ENCODE measurements at regions of chr18 and their contacts with region 1.

Region 1: DNA sequence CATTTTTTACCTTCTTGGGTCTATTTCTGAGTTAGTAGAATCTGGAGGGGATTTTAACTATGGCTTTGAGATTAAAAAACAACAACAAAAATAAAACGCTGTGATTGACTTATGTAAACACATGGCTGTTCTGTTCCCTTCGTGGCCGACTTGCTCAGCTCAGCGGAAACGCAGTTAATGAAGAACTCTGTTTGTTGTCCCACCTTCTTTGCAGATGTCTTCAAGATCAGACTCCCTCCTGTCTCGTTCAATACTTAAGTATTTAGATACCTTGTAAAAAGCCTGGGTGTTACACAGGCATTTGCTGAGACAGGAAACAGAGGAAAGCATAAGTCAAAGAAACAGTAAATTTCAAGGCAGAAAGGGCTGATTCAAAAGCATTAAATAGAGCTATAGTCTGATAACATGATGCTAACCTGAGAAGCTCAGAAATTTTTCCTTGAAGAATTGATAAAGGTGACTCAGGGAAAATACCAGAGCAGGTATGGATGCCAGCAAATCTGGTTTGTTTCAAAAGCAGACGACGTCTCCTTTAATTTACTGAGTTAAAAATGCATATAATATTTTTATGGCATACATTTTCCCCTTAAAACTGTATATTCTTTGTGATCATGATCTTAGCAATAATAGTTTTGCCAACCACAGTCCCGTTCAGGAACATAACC is 21.7 kb upstream of the POLI start:
- DNase-seq: no peak
- ATAC-seq: no peak
- H3K4me3 Mint-ChIP-seq: no peak overlapping the region
- H3K27ac Mint-ChIP-seq: peak overlapping the region; percentile 87
- H3K4me1 Mint-ChIP-seq: peaks cover 45% of the 10 kb centered on the region
- H3K27me3 Mint-ChIP-seq: no peaks in the 10 kb centered on the region
- CTCF ChIP-seq: no peak

Region 2: GRCh38 chr18:54140641-54141040 is 107.0 kb before region 1 on chr18:
- CTCF ChIA-PET with region 1: no interaction called
- POLR2A ChIA-PET with region 1: no interaction called
- intact Hi-C with region 1: no loop called
- DNase-seq: no peak
- ATAC-seq: no peak
- H3K4me3 Mint-ChIP-seq: no peak overlapping the region
- H3K27ac Mint-ChIP-seq: no peak overlapping the region
- H3K4me1 Mint-ChIP-seq: no peaks in the 10 kb centered on the region
- H3K27me3 Mint-ChIP-seq: no peaks in the 10 kb centered on the region
- CTCF ChIP-seq: no peak

Region 3: GRCh38 chr18:54261894-54262293 is 14.3 kb after region 1 on chr18:
- CTCF ChIA-PET with region 1: no interaction called
- POLR2A ChIA-PET with region 1: interaction called, 13 read pairs
- intact Hi-C with region 1: loop called (anchors 1 kb)
- DNase-seq: no peak
- ATAC-seq: peak; percentile 81
- H3K4me3 Mint-ChIP-seq: peak overlapping the region; percentile 67
- H3K27ac Mint-ChIP-seq: peak overlapping the region; percentile 93
- H3K4me1 Mint-ChIP-seq: peaks cover 60% of the 10 kb centered on the region
- H3K27me3 Mint-ChIP-seq: no peaks in the 10 kb centered on the region
- CTCF ChIP-seq: no peak

Region 4: DNA sequence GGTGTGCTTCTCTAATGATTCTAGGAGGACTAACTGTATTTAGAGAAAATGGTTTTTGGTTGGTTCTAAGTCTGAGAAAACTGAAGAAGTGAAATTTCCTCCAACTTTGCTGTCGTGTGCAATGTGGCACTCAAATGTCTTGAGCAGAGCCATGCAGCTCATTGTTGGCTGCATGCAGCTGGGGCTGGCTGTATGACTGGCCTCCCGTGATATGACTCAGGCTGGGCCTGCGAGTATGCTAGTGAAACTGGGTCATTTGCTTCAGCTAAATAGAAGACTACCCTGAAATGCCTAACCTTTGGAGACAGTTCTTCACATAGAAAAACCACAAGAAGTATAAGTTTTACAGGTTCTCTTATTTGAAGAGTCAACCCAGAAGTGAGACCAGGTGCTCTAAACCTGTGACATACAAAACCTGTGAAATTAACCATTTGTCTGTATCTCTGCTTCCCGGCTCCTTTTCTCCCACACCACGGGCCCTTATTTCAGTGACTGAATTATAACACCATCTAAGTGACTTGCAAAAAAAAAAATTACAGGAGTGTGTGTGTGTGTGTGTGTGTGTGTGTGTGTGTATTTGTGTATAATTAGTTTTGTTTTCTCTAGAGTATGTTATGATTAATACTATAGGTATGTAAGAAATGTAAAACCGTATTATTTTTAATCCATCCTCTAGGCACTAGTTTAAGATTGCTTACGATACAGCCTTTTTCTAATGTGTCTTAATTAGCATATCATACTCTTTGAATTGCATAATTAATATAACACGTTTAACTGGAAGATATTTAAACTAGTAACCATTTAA is 37.5 kb after region 1 on chr18:
- CTCF ChIA-PET with region 1: no interaction called
- POLR2A ChIA-PET with region 1: no interaction called
- intact Hi-C with region 1: no loop called
- DNase-seq: no peak
- ATAC-seq: peak; percentile 92
- H3K4me3 Mint-ChIP-seq: no peak overlapping the region
- H3K27ac Mint-ChIP-seq: peak overlapping the region; percentile 33
- H3K4me1 Mint-ChIP-seq: peaks cover 5% of the 10 kb centered on the region
- H3K27me3 Mint-ChIP-seq: no peaks in the 10 kb centered on the region
- CTCF ChIP-seq: no peak